ENCODE measurements at regions of chr12 and their contacts with region 1.

Region 1: DNA sequence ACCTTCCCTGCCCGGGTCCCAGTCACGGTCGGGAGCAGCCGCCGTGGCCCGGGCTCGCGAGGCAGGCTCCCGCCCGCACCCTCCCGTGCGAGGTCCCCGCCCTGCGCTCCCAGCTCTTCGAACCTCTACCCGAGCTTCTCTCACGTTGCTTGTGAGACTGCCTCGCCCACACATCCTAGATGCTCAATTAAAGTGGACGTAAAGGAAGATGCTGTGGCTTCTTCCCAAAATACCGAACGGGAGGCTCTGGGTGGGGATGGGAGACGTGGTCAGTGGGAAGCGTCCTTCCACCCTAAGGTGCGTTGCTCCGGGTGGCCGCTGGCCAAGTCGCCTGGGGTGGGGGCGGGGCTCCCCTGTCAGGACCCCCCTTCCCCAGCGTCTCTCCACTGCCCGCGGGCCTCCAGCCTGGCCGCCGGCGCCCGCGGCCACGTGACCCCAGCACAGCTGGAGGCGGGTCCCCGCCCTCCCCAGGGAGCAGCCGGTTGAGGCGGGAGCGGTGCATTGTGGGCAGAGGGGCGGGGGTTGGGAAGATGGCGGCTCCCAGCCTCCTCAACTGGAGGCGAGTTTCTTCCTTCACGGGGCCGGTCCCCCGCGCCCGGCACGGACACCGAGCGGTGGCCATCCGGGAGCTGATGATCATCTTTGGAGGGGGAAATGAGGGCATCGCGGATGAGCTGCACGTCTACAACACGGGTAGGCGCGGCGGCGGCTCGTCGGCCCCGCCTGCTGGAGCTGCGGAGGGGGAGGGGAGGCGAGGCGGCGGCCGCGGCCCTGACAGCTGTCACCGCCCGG is at the start of gene HCFC2:
- DNase-seq: peak; percentile 93 to 96 (median 95)
- ATAC-seq: peak; percentile 98 to 99 (median 99)
- H3K4me3 ChIP-seq: peak within 1 kb of the TSS; percentile 66 to 99 (median 89)
- H3K27ac ChIP-seq: peak within 1 kb of the TSS; percentile 78 to 95 (median 88)
- H3K4me1 ChIP-seq: peaks cover 0 to 31% (median 21%) of the 10 kb centered on the region in 12 donors
- H3K27me3 ChIP-seq: no peaks in the 10 kb centered on the region
- CTCF ChIP-seq: peak in 1 of 12 donors; percentile 8
- POLR2A ChIP-seq: peak in 1 of 2 donors; percentile 62
- total RNA-seq, gene HCFC2: 7.1 to 14.0 (median 9.3) TPM

Region 2: GRCh38 chr12:103956516-103957027 is 107.7 kb before region 1 on chr12:
- intact Hi-C with region 1: loop called in 1 of 10 experiments (anchors 10 kb)
- DNase-seq: peak in 1 of 5 donors; percentile 68
- ATAC-seq: peak; percentile 25 to 57 (median 46)
- H3K4me3 ChIP-seq: peak overlapping the region; percentile 53 to 90 (median 80)
- H3K27ac ChIP-seq: peak overlapping the region; percentile 84 to 98 (median 95)
- H3K4me1 ChIP-seq: peaks cover 7 to 31% (median 20%) of the 10 kb centered on the region in 12 donors
- H3K27me3 ChIP-seq: no peaks in the 10 kb centered on the region
- CTCF ChIP-seq: no peak
- POLR2A ChIP-seq: no peak

Region 3: DNA sequence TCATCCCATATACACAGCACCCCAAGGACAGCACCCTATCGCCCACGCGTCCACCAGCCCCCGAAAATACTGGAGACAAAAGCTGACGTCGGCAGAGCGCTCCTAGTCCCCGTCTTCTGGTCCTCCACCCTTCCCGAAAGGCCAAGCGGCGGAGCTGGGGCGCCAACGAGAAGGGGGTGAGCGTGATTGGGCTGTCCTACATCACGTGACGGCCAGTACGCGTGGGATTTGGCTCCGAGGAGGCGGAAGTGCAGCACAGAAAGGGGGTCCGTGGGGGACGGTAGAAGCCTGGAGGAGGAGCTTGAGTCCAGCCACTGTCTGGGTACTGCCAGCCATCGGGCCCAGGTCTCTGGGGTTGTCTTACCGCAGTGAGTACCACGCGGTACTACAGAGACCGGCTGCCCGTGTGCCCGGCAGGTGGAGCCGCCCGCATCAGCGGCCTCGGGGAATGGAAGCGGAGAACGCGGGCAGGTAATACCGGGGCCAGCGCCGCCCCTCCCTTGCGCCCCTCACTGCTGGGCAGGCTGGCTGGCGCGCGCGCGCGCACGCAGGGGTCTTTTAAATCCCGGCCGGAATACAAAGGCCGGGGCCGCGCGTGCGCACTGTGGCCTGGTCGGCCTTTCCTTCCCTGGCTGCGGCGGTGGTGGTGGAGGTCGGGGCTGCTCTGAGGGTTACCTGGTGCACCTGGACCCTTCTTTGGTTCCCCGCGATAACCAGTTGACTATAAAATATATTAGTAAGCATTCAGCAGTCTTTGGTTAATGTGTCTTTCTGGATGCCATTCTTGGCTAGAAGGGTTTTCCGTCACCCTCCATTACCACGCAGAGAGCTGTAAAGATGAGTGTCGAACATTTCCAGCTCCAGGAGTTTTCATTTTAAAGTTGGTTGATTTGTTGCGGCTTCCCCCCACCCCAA is 98.4 kb before region 1 on chr12 and contains the start of gene TDG:
- intact Hi-C with region 1: loop called in 8 of 10 experiments (anchors 2 to 10 kb)
- DNase-seq: peak; percentile 98 to 99 (median 99)
- ATAC-seq: peak; percentile 98 to 99 (median 99)
- H3K4me3 ChIP-seq: peak within 1 kb of the TSS; percentile 74 to 99 (median 84)
- H3K27ac ChIP-seq: peak within 1 kb of the TSS; percentile 73 to 98 (median 96)
- H3K4me1 ChIP-seq: peaks cover 4 to 63% (median 51%) of the 10 kb centered on the region in 12 donors
- H3K27me3 ChIP-seq: no peaks in the 10 kb centered on the region
- CTCF ChIP-seq: peak in 3 of 12 donors; percentile 11 to 36 (median 29)
- POLR2A ChIP-seq: peak; percentile 4 to 92
- total RNA-seq, gene TDG: 7.8 to 15.5 (median 13.1) TPM

Region 4: DNA sequence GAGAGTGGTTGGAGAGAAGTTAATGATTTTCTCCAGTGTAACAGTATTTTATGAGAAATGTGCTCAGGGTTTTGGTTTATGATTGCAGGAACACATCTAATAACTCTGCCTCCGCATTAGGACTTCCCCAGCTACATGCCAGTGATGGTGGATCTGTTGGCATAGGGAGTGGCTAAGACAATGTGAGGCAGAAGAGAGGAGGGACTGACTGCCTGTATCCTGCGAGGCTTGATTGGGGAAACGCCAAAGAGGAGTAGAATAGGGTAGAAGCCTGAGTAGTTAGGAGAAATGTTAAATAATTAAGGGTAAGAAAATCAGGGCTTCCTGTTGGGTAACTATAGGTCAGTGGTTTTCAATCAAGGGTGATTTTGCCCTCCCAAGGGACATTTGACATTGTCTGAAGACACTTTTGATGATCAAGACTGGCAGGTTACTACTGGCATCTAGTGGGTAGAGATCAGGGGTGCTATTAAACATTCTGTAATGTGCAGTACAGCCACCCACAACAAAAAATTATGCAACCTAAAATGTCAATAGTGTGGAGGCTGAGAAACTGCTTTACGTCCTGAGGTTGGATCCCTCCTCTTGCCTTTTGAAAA is 85.7 kb before region 1 on chr12:
- intact Hi-C with region 1: loop called in 2 of 10 experiments (anchors 10 kb)
- DNase-seq: no peak
- ATAC-seq: no peak
- H3K4me3 ChIP-seq: no peak overlapping the region
- H3K27ac ChIP-seq: no peak overlapping the region
- H3K4me1 ChIP-seq: peaks cover 0 to 10% (median 5%) of the 10 kb centered on the region in 12 donors
- H3K27me3 ChIP-seq: no peaks in the 10 kb centered on the region
- CTCF ChIP-seq: no peak
- POLR2A ChIP-seq: no peak

Region 5: DNA sequence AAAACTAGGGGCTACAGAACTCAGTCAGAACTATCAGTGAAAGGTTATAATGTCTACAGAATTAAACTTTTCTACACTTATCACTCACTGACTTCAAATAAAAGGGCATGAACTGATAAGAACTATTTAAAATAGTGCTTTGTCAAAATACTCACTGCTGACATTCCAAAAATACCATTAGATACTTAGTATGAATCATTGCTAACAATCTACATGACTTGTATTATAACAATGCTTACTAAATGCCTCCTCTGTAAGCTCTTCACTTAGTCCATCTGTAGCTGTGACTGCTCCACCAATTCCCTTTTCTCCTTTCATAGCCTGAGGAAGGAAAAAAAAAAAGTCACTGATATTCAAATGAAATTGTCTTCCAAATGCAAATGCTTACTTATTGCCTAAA is 56.8 kb after region 1 on chr12:
- intact Hi-C with region 1: loop called in 1 of 10 experiments (anchors 10 kb)
- DNase-seq: no peak
- ATAC-seq: peak in 2 of 4 donors; percentile 46 to 61
- H3K4me3 ChIP-seq: no peak overlapping the region
- H3K27ac ChIP-seq: peak overlapping the region in 4 of 12 donors; percentile 12 to 38 (median 25)
- H3K4me1 ChIP-seq: peaks cover 0 to 20% (median 7%) of the 10 kb centered on the region in 12 donors
- H3K27me3 ChIP-seq: no peaks in the 10 kb centered on the region
- CTCF ChIP-seq: no peak
- POLR2A ChIP-seq: no peak

Region 6: DNA sequence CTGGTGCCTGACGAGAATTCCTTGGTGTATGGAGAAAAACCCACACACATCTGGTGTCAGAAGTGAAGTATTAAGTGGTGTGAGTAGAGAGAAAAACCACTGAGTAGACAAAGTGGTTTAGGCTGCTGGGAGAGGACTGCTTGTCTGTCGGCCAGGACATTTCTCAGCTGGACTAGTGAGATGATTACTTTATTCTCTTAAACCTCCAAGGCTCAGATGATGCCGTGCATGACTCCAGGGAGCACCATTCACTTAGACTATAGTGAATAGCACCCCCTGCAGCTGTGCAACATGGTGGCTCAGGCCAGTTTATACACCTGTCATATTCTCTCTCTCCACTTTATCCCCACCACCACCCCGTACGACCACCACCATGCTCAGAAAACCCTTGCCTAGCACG is 102.2 kb after region 1 on chr12:
- intact Hi-C with region 1: no loop called
- DNase-seq: peak in 3 of 5 donors; percentile 13 to 43 (median 24)
- ATAC-seq: peak; percentile 17 to 80 (median 63)
- H3K4me3 ChIP-seq: no peak overlapping the region
- H3K27ac ChIP-seq: peak overlapping the region in 10 of 12 donors; percentile 18 to 64 (median 44)
- H3K4me1 ChIP-seq: peaks cover 0 to 29% (median 16%) of the 10 kb centered on the region in 12 donors
- H3K27me3 ChIP-seq: no peaks in the 10 kb centered on the region
- CTCF ChIP-seq: peak in 2 of 12 donors; percentile 8 to 16
- POLR2A ChIP-seq: no peak

Region 7: DNA sequence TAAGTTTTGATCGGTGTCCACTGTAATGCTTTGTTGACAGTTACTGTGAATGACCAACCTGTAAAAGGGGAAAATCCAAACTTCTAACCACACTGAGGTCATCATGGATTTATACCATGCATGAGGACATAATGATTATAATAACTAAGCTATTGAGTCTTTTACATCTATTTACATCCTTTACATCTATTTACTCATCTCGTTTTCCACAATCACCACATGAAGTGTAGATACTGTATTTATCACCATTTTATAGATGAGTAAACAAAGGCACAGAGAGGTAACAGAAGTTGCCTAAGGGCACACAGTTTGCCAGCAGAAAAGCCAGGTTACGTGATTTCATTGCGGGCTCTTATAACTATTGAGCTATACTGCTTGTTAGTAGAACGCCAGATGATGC is 211.5 kb after region 1 on chr12:
- intact Hi-C with region 1: no loop called
- DNase-seq: no peak
- ATAC-seq: no peak
- H3K4me3 ChIP-seq: no peak overlapping the region
- H3K27ac ChIP-seq: no peak overlapping the region
- H3K4me1 ChIP-seq: peaks cover 0 to 9% (median 3%) of the 10 kb centered on the region in 12 donors
- H3K27me3 ChIP-seq: no peaks in the 10 kb centered on the region
- CTCF ChIP-seq: no peak
- POLR2A ChIP-seq: no peak

Measured in heart left ventricle (tissue), 16 donors.